ENCODE measurements at regions of chr14 and their contacts with region 1.

Region 1: DNA sequence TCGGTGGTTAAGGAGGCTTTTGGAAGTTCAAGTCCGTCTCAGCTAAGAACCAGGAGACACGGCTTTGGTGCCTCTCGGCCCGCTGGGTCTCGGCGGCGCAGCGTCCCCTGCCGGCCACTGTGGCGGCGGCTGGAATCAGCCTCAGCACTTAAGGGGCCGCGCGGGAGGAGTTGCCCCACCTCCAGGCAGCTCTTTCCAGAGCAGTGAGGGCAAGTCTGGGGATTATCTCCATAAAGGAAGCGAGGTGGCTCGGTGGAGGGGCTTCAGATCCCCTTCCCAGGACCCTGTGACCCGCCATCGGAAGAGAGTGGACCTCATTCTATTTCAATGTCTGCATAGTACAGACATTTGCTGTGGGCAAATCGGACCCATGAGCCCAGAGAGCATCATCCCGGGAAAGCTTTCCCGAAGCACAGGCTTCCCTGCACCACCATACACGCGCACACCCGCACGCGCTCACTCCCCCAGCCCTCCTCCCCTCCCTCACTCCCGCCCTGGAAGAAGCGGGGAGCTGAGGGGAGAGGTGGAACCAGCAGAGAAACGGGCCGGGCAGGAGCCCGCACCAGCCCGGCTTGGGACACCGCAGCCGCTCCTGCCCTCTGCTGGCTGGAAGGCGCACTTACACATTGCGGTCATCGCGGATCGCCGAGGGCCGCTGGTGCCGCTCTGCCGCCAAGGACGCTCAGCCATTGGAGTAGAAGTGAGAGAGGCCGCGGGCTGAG is 15.9 kb downstream of the RNASE2 start:
- ATAC-seq: peak; percentile 84 to 96 (median 94)
- H3K4me3 ChIP-seq: peak overlapping the region; percentile 45 to 56 (median 46)
- H3K27ac ChIP-seq: peak overlapping the region; percentile 15 to 52
- H3K4me1 ChIP-seq: peaks cover 0 to 4% of the 10 kb centered on the region in 2 donors

Region 2: GRCh38 chr14:20690848-20691523 is 280.2 kb before region 1 on chr14:
- in situ Hi-C with region 1: loop called in 1 of 9 experiments (anchors 10 kb)
- ATAC-seq: peak; percentile 74 to 94 (median 81)
- H3K4me3 ChIP-seq: no peak overlapping the region
- H3K27ac ChIP-seq: no peak overlapping the region
- H3K4me1 ChIP-seq: no peaks in the 10 kb centered on the region

Region 3: GRCh38 chr14:20714593-20715250 is 256.4 kb before region 1 on chr14:
- in situ Hi-C with region 1: loop called in 2 of 9 experiments (anchors 25 kb)
- ATAC-seq: peak in 1 of 8 experiments; percentile 41
- H3K4me3 ChIP-seq: no peak overlapping the region
- H3K27ac ChIP-seq: no peak overlapping the region
- H3K4me1 ChIP-seq: no peaks in the 10 kb centered on the region

Measured in motor neuron (in vitro differentiated cells).